ENCODE measurements at regions of chr2 and their contacts with region 1.

Region 1: GRCh38 chr2:168961450-168962229 is 60.5 kb downstream of the G6PC2 start:
- DNase-seq: peak; percentile 48
- ATAC-seq: peak; percentile 81
- H3K4me3 Mint-ChIP-seq: no peak overlapping the region
- H3K27ac Mint-ChIP-seq: no peak overlapping the region
- H3K4me1 Mint-ChIP-seq: peaks cover 16% of the 10 kb centered on the region
- H3K27me3 Mint-ChIP-seq: no peaks in the 10 kb centered on the region

Region 2: DNA sequence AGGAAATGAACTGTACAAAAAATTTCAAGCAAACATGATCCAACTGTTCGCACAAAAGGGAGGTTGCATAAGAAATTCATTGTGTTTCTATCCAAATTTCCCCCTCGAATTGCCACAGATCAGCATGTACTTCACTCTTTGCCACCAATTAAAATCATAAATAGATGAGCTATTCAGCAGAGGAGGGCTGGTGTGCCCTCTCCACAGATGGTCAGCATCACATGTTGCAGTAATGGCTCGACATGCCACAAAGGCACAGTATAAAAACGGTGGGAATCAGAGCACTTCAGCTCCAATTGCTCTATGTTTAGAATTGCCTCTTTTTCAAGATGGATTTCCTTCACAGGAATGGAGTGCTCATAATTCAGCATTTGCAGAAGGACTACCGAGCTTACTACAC is 60.6 kb before region 1 on chr2 and contains the start of gene G6PC2:
- CTCF ChIA-PET with region 1: no interaction called
- DNase-seq: no peak
- ATAC-seq: no peak
- H3K4me3 Mint-ChIP-seq: no peak within 1 kb of the TSS
- H3K27ac Mint-ChIP-seq: no peak within 1 kb of the TSS
- H3K4me1 Mint-ChIP-seq: no peaks in the 10 kb centered on the region
- H3K27me3 Mint-ChIP-seq: peaks cover 49% of the 10 kb centered on the region
- total RNA-seq, gene G6PC2: not detected

Region 3: DNA sequence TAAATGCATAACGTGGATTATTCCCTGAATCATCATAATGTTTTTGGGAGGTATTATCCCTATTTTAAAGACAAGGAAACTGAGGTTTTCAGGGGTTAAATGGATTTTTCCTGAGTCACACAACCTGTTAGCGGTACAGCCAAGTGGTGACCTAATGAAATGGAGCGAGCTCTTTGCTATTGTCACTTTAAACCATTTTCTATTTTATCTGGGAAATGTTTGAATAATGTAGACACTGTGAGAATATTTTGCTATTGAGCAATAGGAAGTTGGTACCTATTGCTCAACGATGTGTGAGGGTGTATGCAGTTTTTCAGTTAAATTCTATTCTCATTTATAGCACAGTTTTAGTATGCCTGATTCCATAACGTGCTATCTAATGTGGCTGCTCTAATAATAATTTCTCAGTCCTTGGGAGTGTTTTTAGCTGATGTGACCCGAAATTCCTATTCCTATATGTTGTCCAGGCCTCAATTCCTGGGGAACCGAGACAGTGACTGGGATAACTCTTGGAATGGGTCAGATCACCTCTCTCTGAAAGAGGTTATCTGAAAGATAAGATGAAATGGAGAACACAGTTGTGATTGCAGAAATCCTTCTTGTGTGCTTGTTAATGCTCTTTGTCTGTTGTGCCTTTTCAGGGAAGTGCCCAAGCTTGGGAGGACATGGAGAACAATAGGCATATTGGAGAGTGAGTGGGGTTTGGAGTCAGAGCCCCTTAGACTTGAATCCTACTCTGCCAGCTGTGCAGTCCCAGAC is 31.1 kb after region 1 on chr2:
- CTCF ChIA-PET with region 1: no interaction called
- DNase-seq: no peak
- ATAC-seq: no peak
- H3K4me3 Mint-ChIP-seq: no peak overlapping the region
- H3K27ac Mint-ChIP-seq: no peak overlapping the region
- H3K4me1 Mint-ChIP-seq: peaks cover 10% of the 10 kb centered on the region
- H3K27me3 Mint-ChIP-seq: peaks cover 14% of the 10 kb centered on the region

Region 4: GRCh38 chr2:169131587-169132512 is 170.2 kb after region 1 on chr2:
- CTCF ChIA-PET with region 1: interaction called, 24 read pairs
- DNase-seq: no peak
- ATAC-seq: peak; percentile 55
- H3K4me3 Mint-ChIP-seq: no peak overlapping the region
- H3K27ac Mint-ChIP-seq: no peak overlapping the region
- H3K4me1 Mint-ChIP-seq: peaks cover 5% of the 10 kb centered on the region
- H3K27me3 Mint-ChIP-seq: no peaks in the 10 kb centered on the region

Region 5: GRCh38 chr2:169141713-169142352 is 180.2 kb after region 1 on chr2:
- CTCF ChIA-PET with region 1: interaction called, 23 read pairs
- DNase-seq: peak; percentile 64
- ATAC-seq: peak; percentile 45
- H3K4me3 Mint-ChIP-seq: no peak overlapping the region
- H3K27ac Mint-ChIP-seq: no peak overlapping the region
- H3K4me1 Mint-ChIP-seq: no peaks in the 10 kb centered on the region
- H3K27me3 Mint-ChIP-seq: no peaks in the 10 kb centered on the region

Measured in activated CD8-positive, alpha-beta memory T cell treated with anti-CD3 and anti-CD28 coated beads, Interleukin-2, amount 10 ng/mL, durations not matched to agents 7 days and 5 days (primary cell).